ENCODE measurements at regions of chr9 and their contacts with region 1.

Region 1: GRCh38 chr9:37978983-37979382 is 75.1 kb upstream of the SLC25A51 start:
- DNase-seq: no peak
- H3K4me3 ChIP-seq: no peak overlapping the region
- H3K27ac ChIP-seq: no peak overlapping the region
- H3K4me1 ChIP-seq: peaks cover 21% of the 10 kb centered on the region
- H3K27me3 ChIP-seq: no peaks in the 10 kb centered on the region
- CTCF ChIP-seq: no peak

Region 2: GRCh38 chr9:37998881-37999587 is 20.1 kb after region 1 on chr9:
- CTCF ChIA-PET with region 1: no interaction called
- POLR2A ChIA-PET with region 1: no interaction called
- intact Hi-C with region 1: loop called (anchors 2 kb)
- DNase-seq: peak; percentile 55
- H3K4me3 ChIP-seq: no peak overlapping the region
- H3K27ac ChIP-seq: peak overlapping the region; percentile 76
- H3K4me1 ChIP-seq: peaks cover 55% of the 10 kb centered on the region
- H3K27me3 ChIP-seq: no peaks in the 10 kb centered on the region
- CTCF ChIP-seq: no peak

Region 3: GRCh38 chr9:38079461-38080031 is 100.6 kb after region 1 on chr9:
- CTCF ChIA-PET with region 1: no interaction called
- POLR2A ChIA-PET with region 1: no interaction called
- intact Hi-C with region 1: no loop called
- DNase-seq: peak; percentile 62
- H3K4me3 ChIP-seq: no peak overlapping the region
- H3K27ac ChIP-seq: no peak overlapping the region
- H3K4me1 ChIP-seq: peaks cover 11% of the 10 kb centered on the region
- H3K27me3 ChIP-seq: no peaks in the 10 kb centered on the region
- CTCF ChIP-seq: no peak

Measured in A673 (cell line).